Activated CD4-positive, alpha-beta memory T cell treated with anti-CD3 and anti-CD28 coated beads, Interleukin-2, amount 10 ng/mL, durations not matched to agents 7 days and 5 days (primary cell): ENCODE measurements at regions of chr14 and their contacts with region 1.

Region 1: GRCh38 chr14:91418387-91419043 is 895 bp upstream of the CCDC88C start:
- DNase-seq: peak; percentile 84
- H3K4me3 Mint-ChIP-seq: peak overlapping the region; percentile 72
- H3K27ac Mint-ChIP-seq: peak overlapping the region; percentile 73
- H3K4me1 Mint-ChIP-seq: peaks cover 29% of the 10 kb centered on the region
- H3K27me3 Mint-ChIP-seq: peaks cover 8% of the 10 kb centered on the region

Region 2: DNA sequence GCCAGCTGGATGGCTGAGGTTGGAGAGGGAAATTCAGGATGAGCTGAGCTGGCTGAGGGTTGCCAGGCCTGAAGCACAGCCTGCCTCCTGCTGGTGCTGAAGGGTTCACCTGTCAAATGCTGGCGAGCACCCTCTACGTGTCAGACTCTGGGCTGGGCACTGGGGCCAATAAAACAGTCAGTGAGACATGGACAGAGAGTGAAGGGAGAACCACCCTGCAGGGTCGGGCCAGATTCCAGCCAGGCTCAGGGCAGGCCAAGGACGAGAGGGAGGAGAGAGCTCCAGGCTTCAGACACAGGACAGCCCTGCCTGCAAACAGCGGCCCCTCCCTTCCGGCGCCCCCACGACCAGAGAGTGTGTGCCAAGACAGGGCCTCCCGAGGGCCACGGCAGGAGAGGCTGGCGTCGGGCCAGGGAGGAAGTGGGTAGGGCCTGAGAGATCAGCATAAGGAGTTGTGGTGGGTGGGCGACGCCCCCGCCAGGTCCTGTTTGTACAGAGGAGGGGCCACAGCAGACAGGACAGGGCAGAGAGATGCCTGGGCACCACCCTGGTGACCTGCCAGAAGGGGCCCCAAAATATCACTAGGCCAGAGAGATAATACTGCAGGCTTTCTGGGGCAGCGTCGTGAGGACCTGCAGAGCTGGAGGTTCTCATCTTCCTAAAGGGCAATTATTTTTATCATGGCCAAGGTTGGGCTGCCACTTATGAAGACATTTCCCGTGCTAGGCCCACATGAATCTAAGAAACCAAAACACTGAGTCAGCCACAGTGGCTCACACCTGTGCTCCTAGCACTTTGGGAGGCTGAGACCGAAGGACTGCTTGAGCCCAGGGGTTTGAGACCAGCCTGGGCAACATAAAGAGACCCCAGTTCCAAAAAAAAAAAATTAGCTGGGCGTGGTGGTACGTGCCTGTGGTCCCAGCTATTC is 100.9 kb before region 1 on chr14:
- CTCF ChIA-PET with region 1: interaction called, 105 read pairs
- POLR2A ChIA-PET with region 1: interaction called, 68 read pairs
- DNase-seq: peak; percentile 86
- H3K4me3 Mint-ChIP-seq: peak overlapping the region; percentile 46
- H3K27ac Mint-ChIP-seq: peak overlapping the region; percentile 95
- H3K4me1 Mint-ChIP-seq: peaks cover 83% of the 10 kb centered on the region
- H3K27me3 Mint-ChIP-seq: no peaks in the 10 kb centered on the region

Region 3: DNA sequence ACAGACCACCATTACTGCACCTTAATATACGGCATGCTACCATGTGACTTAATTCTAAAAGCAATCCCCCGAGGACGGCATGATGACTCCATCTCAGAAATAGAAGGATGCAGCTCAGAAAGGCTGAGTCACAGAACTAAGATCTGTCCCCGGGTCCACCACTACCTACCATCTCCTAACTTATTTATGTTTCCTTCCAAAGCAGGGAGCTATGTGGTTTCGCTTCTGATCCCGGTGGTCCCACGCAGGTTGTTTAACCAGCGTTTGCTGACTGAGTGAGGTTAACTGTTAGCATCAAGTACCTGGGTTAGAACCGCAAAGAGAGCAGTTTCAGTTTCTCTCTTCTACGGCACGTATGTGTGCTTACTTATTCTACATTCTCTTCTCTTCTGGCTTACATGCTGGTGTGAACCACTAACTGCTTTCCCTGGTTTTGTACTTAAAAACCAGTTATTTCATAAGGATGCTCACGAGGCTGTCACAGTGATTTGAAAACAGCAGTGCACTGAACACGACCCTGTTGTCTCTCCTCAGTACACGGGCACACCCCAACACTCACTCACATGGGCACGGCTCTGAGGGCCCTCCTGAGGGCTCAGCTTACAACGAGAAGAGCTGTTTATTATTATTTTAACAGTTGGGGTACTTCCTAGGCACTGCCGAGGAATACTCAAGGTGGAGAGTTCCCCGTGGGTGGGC is 67.6 kb before region 1 on chr14:
- CTCF ChIA-PET with region 1: interaction called, 16 read pairs
- POLR2A ChIA-PET with region 1: interaction called, 77 read pairs
- DNase-seq: peak; percentile 76
- H3K4me3 Mint-ChIP-seq: peak overlapping the region; percentile 71
- H3K27ac Mint-ChIP-seq: peak overlapping the region; percentile 96
- H3K4me1 Mint-ChIP-seq: peaks cover 90% of the 10 kb centered on the region
- H3K27me3 Mint-ChIP-seq: no peaks in the 10 kb centered on the region

Region 4: GRCh38 chr14:91373591-91374254 is 44.8 kb before region 1 on chr14:
- CTCF ChIA-PET with region 1: interaction called, 18 read pairs
- POLR2A ChIA-PET with region 1: interaction called, 135 read pairs
- DNase-seq: peak; percentile 69
- H3K4me3 Mint-ChIP-seq: peak overlapping the region; percentile 71
- H3K27ac Mint-ChIP-seq: peak overlapping the region; percentile 94
- H3K4me1 Mint-ChIP-seq: peaks cover 99% of the 10 kb centered on the region
- H3K27me3 Mint-ChIP-seq: no peaks in the 10 kb centered on the region

Region 5: DNA sequence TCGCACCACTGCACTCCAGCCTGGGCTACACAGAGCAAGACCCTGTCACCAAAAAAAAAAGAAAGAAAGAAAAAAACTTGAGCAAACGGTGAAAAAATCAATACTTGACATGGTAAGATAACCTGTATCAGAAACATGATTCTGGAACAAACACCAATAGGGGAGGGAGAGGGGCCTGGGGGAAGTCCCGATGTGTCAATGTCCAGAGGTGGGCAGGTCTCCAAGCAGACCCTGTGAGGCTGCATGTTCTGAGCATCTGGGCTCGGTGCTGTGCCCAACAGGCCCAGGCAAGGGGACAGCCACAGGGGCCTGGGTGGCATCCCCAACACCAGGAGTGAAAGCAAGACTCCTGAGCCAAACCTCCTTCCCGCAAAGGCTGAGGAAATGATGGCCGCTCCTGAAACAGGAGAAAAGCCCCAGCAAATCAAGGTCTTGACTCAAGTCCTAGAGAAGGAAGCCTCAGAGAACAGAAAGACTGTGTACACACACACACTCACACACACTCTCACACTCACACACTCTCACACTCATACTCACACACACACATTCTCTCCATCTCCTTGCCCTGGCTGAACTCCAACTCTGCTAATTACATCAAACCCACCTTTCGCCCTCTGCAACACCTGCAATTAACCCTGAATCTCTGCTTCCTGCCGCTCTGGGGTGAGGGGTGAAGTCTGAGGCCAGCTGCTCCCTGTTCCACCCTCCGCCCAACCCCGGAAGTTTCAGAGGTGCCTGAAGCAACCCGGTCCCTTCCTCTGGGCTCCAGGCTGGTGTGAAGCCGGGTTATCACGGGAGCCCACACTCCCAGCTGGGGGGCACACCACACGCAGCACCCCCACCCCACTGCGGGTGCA is 21.3 kb before region 1 on chr14:
- CTCF ChIA-PET with region 1: interaction called, 35 read pairs
- POLR2A ChIA-PET with region 1: interaction called, 308 read pairs
- DNase-seq: peak; percentile 81
- H3K4me3 Mint-ChIP-seq: peak overlapping the region; percentile 68
- H3K27ac Mint-ChIP-seq: peak overlapping the region; percentile 85
- H3K4me1 Mint-ChIP-seq: peaks cover 95% of the 10 kb centered on the region
- H3K27me3 Mint-ChIP-seq: no peaks in the 10 kb centered on the region

Region 6: GRCh38 chr14:91510174-91511042 is 91.9 kb after region 1 on chr14 and contains the start of gene PPP4R3A:
- CTCF ChIA-PET with region 1: no interaction called
- POLR2A ChIA-PET with region 1: interaction called, 10 read pairs
- DNase-seq: peak; percentile 94
- H3K4me3 Mint-ChIP-seq: peak within 1 kb of the TSS; percentile 98
- H3K27ac Mint-ChIP-seq: peak within 1 kb of the TSS; percentile 100
- H3K4me1 Mint-ChIP-seq: peaks cover 24% of the 10 kb centered on the region
- H3K27me3 Mint-ChIP-seq: no peaks in the 10 kb centered on the region
- total RNA-seq, gene PPP4R3A: 118 to 123 TPM